ENCODE measurements at regions of chr18 and their contacts with region 1.

Region 1: GRCh38 chr18:74652392-74652988 is 54.8 kb downstream of the ZNF407 start:
- DNase-seq: no peak
- H3K4me3 ChIP-seq: no peak overlapping the region
- H3K27ac ChIP-seq: no peak overlapping the region
- H3K4me1 ChIP-seq: no peaks in the 10 kb centered on the region
- H3K27me3 ChIP-seq: no peaks in the 10 kb centered on the region
- CTCF ChIP-seq: peak in 3 of 4 experiments; percentile 49 to 62 (median 49)
- POLR2A ChIP-seq: no peak

Region 2: GRCh38 chr18:75478996-75479880 is 826.7 kb after region 1 on chr18:
- intact Hi-C with region 1: loop called (anchors 5 kb)
- DNase-seq: no peak
- H3K4me3 ChIP-seq: no peak overlapping the region
- H3K27ac ChIP-seq: no peak overlapping the region
- H3K4me1 ChIP-seq: no peaks in the 10 kb centered on the region
- H3K27me3 ChIP-seq: no peaks in the 10 kb centered on the region
- CTCF ChIP-seq: peak; percentile 12 to 64 (median 58)
- POLR2A ChIP-seq: no peak

Region 3: DNA sequence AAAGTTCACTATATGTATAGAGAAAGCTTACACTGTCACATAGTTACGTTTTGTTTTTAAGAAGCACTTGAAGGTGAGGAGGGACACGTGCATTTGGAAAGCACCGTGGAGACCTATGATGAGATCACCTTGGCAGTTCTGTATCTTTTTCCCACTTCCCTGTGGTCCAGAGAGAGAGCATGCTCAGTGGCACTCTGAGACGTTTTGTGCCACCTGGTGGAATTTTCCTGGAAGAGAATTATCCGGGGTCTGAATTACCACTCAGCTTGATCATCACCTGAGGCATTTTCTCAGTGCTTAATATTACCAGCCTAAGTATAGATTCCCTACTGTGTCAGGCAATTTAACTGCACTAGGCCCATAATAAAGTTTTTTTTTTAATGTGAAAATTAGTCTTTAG is 1244.4 kb after region 1 on chr18:
- intact Hi-C with region 1: loop called (anchors 10 kb)
- DNase-seq: no peak
- H3K4me3 ChIP-seq: no peak overlapping the region
- H3K27ac ChIP-seq: no peak overlapping the region
- H3K4me1 ChIP-seq: no peaks in the 10 kb centered on the region
- H3K27me3 ChIP-seq: no peaks in the 10 kb centered on the region
- CTCF ChIP-seq: peak in 1 of 4 experiments; percentile 22
- POLR2A ChIP-seq: no peak

Region 4: DNA sequence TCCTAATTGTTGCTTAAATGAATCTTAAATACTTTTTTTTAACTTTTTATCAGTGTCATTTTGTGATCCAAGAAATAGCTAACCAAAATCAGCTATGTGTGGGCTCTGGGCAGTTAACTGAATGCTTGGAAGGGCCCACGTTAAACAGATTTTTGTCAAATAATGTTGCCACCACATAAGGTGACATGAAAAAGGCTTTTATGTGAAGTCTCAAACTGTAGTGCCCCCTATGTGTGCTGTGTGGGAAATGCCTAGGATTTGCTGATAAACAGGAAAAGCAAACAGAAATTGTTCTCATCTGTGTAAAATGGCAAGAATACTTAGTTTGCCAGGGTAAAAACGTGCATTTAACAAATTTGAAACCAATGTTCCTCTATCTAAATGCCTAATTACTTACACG is 1600.4 kb after region 1 on chr18:
- intact Hi-C with region 1: loop called (anchors 10 kb)
- DNase-seq: no peak
- H3K4me3 ChIP-seq: no peak overlapping the region
- H3K27ac ChIP-seq: no peak overlapping the region
- H3K4me1 ChIP-seq: no peaks in the 10 kb centered on the region
- H3K27me3 ChIP-seq: no peaks in the 10 kb centered on the region
- CTCF ChIP-seq: peak in 1 of 4 experiments; percentile 11
- POLR2A ChIP-seq: no peak

Region 5: GRCh38 chr18:76349067-76349715 is 1696.7 kb after region 1 on chr18:
- intact Hi-C with region 1: loop called (anchors 10 kb)
- DNase-seq: peak; percentile 74
- H3K4me3 ChIP-seq: peak overlapping the region in 1 of 2 donors; percentile 8
- H3K27ac ChIP-seq: no peak overlapping the region
- H3K4me1 ChIP-seq: peaks cover 10% of the 10 kb centered on the region
- H3K27me3 ChIP-seq: no peaks in the 10 kb centered on the region
- CTCF ChIP-seq: peak; percentile 84 to 86 (median 86)
- POLR2A ChIP-seq: no peak